B cell (primary cell): ENCODE measurements at regions of chrX and their contacts with region 1.

Region 1: DNA sequence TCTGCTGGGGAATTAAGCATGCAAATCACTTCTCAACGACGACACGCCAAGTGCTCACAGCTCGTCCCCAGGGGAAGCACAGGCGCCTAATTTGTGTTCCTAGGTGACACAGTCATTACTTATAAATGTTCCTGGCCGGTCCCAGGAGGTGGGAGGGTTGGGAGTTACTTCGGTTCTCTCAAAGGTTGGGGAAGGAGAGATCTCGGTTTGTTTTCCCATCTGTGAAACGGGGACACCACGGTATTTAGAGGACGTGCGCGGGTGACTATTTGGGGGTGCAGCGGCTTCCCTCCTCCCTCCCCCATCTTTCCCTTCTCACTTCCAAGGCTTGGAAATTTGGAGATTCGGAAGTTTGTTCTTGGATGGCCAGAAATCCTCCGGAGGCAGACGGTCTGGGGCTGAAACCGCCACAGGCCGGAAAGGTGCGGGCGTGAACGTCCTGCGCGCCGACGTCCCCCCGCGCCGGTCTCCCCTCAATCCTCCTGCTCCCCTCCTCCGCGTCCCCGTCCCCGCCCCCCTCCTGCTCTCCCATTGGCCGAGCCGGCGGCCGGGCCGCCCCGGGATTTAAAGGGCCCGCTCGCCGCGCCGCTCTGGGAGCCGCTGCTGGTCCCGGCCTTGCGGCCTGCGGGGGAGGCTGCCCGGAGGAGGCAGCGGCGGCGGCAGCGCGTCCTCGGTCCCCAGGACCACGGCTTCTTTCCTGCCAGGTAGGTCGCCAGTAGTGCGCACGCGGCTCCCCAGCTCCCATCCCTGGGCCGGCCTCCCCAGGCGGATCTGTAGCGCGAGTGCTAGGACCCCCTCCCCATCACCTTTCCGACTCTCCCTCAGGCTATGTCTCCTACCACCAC is at the start of gene PORCN:
- DNase-seq: peak; percentile 82
- ATAC-seq: peak; percentile 92
- H3K4me3 ChIP-seq: peak within 1 kb of the TSS; percentile 58 to 82 (median 74)
- H3K4me3 Mint-ChIP-seq: peak within 1 kb of the TSS; percentile 92
- H3K27ac ChIP-seq: peak within 1 kb of the TSS; percentile 89 to 92
- H3K27ac Mint-ChIP-seq: peak within 1 kb of the TSS; percentile 96
- H3K4me1 ChIP-seq: peaks cover 3 to 13% of the 10 kb centered on the region in 2 donors
- H3K4me1 Mint-ChIP-seq: peaks cover 12% of the 10 kb centered on the region
- H3K27me3 ChIP-seq: no peaks in the 10 kb centered on the region
- H3K27me3 Mint-ChIP-seq: no peaks in the 10 kb centered on the region
- CTCF ChIP-seq: no peak
- total RNA-seq, gene PORCN: 12.8 and 13.0 TPM in 2 replicates

Region 2: DNA sequence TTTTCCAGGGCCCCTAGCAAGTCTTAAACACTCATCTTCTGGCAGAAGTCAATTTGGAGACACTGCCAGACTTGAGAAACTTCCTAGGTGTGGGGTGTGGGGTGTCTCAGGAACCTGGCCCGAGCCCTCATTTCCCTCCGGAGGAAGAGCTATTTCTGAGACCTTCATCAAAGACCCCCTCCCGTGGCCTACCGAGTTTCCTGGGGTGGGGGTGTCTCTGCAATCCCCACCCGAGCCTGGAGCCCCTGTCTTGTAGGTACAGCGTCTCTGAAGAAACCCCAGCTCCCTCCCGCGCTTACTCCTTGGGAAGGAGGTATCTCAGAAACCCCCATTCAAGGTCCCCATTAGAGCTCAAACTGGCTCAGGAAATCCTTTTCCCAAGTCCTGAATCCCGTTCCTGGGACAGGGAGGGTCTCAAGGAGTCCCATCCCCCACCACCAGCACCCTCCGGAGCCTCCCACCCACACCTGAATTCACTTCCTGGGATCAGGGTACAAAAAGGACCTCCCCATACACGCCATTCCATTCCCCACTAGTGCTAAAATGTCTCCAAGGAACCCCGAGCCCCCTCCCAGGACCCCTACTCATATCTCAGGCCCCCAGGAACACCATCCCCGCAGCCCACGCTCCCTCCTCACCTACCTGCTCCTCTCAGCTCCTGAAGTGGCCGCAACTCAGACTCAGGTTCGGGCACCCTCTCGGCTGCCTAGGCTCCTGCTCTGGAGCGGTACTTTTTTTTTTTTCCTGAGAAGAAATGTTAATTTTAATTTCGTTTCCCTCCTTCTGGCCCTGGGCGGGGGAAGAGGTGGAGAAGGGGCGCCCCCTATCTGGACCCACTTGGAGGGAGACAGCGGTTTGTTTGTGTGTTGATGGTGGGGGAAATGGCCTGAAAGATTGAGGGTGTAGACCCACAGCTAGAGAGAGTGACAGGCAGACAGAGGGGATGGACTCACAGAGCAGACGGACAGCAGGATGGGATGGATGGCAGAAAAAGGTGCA is 39.6 kb before region 1 on chrX:
- CTCF ChIA-PET with region 1: no interaction called
- POLR2A ChIA-PET with region 1: no interaction called
- intact Hi-C with region 1: loop called (anchors 5 kb)
- DNase-seq: peak; percentile 49
- ATAC-seq: peak; percentile 44
- H3K4me3 ChIP-seq: peak overlapping the region; percentile 38 to 74 (median 64)
- H3K4me3 Mint-ChIP-seq: peak overlapping the region; percentile 87
- H3K27ac ChIP-seq: peak overlapping the region in 1 of 2 donors; percentile 49
- H3K27ac Mint-ChIP-seq: peak overlapping the region; percentile 79
- H3K4me1 ChIP-seq: peaks cover 3 to 11% of the 10 kb centered on the region in 2 donors
- H3K4me1 Mint-ChIP-seq: peaks cover 16% of the 10 kb centered on the region
- H3K27me3 ChIP-seq: no peaks in the 10 kb centered on the region
- H3K27me3 Mint-ChIP-seq: no peaks in the 10 kb centered on the region
- CTCF ChIP-seq: peak; percentile 15

Region 3: GRCh38 chrX:48539345-48540027 is 30.9 kb after region 1 on chrX and contains the start of gene TBC1D25:
- CTCF ChIA-PET with region 1: interaction called, 3 read pairs
- POLR2A ChIA-PET with region 1: interaction called, 5 read pairs
- intact Hi-C with region 1: loop called (anchors 1 kb)
- DNase-seq: peak; percentile 97
- ATAC-seq: peak; percentile 79
- H3K4me3 ChIP-seq: peak within 1 kb of the TSS in 4 of 5 experiments; percentile 66 to 76 (median 74)
- H3K4me3 Mint-ChIP-seq: peak within 1 kb of the TSS; percentile 91
- H3K27ac ChIP-seq: peak within 1 kb of the TSS; percentile 94 to 97
- H3K27ac Mint-ChIP-seq: peak within 1 kb of the TSS; percentile 97
- H3K4me1 ChIP-seq: peaks cover 10 to 18% of the 10 kb centered on the region in 2 donors
- H3K4me1 Mint-ChIP-seq: peaks cover 20% of the 10 kb centered on the region
- H3K27me3 ChIP-seq: no peaks in the 10 kb centered on the region
- H3K27me3 Mint-ChIP-seq: no peaks in the 10 kb centered on the region
- CTCF ChIP-seq: peak; percentile 50
- total RNA-seq, gene TBC1D25: 24.6 and 25.2 TPM in 2 replicates